ENCODE measurements at regions of chr5 and their contacts with region 1.

Region 1: DNA sequence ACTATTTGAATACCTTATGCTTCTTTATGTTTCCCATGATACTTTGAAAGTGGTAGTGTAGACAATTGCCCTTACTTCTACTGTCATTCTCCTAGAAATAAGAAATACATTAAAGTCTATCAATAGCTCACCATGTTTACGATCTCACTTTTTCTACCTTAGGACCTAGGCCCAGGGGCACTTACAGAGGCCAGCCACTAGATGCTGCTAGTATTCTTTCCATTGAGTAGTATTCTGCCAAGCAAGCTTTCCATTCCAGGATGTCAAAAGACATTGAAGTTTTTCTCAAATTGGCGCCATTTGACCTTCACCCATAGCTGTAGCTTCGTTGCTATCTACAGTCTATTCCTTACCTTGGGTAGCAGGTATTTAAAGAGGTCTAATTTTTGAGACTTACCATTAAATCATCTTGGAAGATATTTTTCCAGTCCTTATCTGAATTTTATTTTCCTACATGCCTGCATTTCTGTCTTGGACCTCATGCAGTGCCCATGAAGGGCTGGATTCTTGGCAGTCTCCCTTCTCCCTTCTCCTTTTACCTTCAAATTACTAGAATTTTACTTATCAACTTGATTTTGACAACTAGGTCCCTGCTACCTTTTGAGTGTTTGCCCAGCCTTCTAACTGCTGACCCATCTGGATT is 246.0 kb upstream of the NUDT12 start:
- DNase-seq: peak; percentile 32
- CTCF ChIP-seq: peak; percentile 92

Region 2: GRCh38 chr5:103793595-103794182 is 14.9 kb before region 1 on chr5:
- CTCF ChIA-PET with region 1: interaction called, 10 read pairs
- POLR2A ChIA-PET with region 1: no interaction called
- DNase-seq: no peak
- CTCF ChIP-seq: no peak

Region 3: GRCh38 chr5:103889517-103890209 is 81.1 kb after region 1 on chr5:
- CTCF ChIA-PET with region 1: no interaction called
- POLR2A ChIA-PET with region 1: no interaction called
- DNase-seq: no peak
- CTCF ChIP-seq: no peak

Region 4: DNA sequence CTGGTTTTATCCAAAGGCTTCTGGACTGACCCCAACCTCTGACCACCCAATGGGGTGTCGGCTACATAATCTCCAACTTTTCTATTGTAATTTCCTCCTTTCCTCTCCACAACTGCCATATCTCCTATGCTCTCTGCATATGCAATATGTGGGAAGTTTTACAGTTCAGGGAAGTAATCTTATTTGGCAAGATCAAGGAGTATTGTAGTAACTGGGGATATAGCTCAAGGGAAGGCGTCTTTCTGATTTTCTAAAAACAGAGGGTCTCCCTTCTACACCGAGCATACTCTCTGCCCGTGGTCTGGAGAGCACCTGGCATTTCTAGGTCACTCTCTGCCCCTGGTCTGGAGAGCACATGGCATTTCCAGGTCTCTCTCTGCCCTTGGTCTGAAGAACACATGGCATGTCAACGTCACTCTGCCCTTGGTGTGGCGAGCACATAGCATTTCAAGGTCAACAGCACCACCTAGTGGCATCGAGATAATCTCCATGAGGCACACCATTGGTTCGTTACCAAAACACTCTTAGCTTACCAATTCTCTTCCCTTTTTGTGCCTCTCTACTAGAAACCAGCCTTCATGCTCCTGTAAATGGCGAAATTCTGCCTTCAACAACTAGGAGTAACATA is 370.4 kb after region 1 on chr5:
- CTCF ChIA-PET with region 1: interaction called, 11 read pairs
- POLR2A ChIA-PET with region 1: no interaction called
- DNase-seq: peak; percentile 10
- CTCF ChIP-seq: peak; percentile 26

Region 5: DNA sequence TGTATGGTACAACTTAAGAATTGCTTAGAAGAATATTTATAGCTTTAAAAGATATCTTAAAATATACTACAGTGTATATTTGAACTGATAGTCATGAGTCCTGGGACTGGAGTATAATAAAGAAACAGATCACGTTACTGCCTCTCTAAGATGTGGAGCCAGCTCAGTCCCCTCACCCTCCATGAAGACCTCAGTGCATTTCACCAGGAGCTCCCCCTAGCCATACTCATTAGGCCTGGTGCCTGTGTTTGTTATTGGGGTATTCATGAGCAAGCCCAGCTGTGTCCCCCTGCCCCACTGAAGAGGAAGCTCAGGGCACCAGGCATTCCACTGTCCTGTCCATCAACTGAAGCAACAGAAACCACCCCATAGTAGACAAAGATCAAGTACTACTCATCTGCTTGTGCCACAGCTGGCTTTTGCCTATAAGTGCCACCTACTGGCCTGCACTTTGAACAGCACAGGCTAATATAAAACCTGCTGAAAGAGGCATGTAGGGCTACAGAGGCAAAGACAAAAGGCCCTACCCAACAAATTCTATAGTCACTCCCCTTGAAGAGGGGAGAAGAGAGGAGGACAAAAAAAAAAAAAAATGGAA is 604.2 kb after region 1 on chr5:
- CTCF ChIA-PET with region 1: interaction called, 26 read pairs
- POLR2A ChIA-PET with region 1: no interaction called
- DNase-seq: peak; percentile 10
- CTCF ChIP-seq: peak; percentile 74